Endothelial cell of umbilical vein (primary cell): ENCODE measurements at regions of chr1 and their contacts with region 1.

Region 1: GRCh38 chr1:206030714-206031113 is 7.0 kb upstream of the CTSE start:
- DNase-seq: peak; percentile 75
- H3K4me3 ChIP-seq: no peak overlapping the region
- H3K27ac ChIP-seq: no peak overlapping the region
- H3K4me1 ChIP-seq: peaks cover 32% of the 10 kb centered on the region
- H3K27me3 ChIP-seq: no peaks in the 10 kb centered on the region
- CTCF ChIP-seq: peak; percentile 86
- POLR2A ChIP-seq: no peak

Region 2: GRCh38 chr1:205812878-205813754 is 217.6 kb before region 1 on chr1 and contains the start of gene SLC41A1:
- CTCF ChIA-PET with region 1: no interaction called
- POLR2A ChIA-PET with region 1: no interaction called
- dilution Hi-C with region 1: no loop called
- intact Hi-C with region 1: no loop called
- DNase-seq: peak; percentile 96
- H3K4me3 ChIP-seq: peak within 1 kb of the TSS; percentile 49 to 78 (median 76)
- H3K27ac ChIP-seq: peak within 1 kb of the TSS; percentile 45
- H3K4me1 ChIP-seq: peaks cover 10% of the 10 kb centered on the region
- H3K27me3 ChIP-seq: no peaks in the 10 kb centered on the region
- CTCF ChIP-seq: no peak
- POLR2A ChIP-seq: peak; percentile 41
- total RNA-seq, gene SLC41A1: 21.7 and 23.6 TPM in 2 replicates

Region 3: GRCh38 chr1:205925730-205926129 is 105.0 kb before region 1 on chr1:
- CTCF ChIA-PET with region 1: no interaction called
- POLR2A ChIA-PET with region 1: no interaction called
- dilution Hi-C with region 1: no loop called
- intact Hi-C with region 1: no loop called
- DNase-seq: no peak
- H3K4me3 ChIP-seq: no peak overlapping the region
- H3K27ac ChIP-seq: no peak overlapping the region
- H3K4me1 ChIP-seq: no peaks in the 10 kb centered on the region
- H3K27me3 ChIP-seq: no peaks in the 10 kb centered on the region
- CTCF ChIP-seq: no peak
- POLR2A ChIP-seq: no peak

Region 4: DNA sequence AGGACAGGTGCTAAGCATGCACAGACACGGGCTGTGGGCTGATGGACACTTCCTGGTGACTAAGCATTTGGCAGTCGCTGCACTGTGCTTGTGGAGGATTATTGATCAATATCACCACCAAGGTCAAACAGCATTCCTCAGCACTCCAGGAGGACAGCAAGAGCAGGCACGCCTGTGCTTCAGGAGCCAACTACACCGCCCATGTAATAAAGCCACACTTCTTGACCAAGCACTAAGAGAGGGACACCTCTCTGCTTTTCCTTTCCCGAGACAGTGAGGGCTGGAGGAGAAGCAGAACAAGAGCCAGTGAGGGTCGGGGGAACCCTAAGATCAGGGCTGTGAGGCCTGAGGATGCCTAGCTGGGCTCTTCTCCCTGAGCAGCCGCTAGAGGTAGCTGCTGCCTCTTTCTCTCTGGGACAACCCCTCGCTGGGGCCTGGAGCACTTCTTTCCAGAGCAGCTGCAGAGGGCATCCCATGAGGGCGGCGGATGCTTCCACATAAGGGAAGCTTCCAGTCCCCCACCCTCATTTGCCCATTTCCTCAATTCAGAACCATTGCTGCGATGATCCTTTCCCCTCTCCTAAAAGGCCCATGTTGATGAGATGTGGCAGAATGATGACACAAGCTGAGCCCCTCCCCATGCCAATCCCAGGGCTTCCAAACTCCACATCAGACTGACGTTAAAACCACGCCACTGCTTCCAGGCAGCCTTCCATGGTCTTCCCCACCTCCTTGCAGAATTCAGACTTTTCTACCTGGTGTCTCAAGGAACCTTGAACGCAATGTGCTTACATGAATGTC is 46.6 kb before region 1 on chr1:
- CTCF ChIA-PET with region 1: interaction called, 70 read pairs
- POLR2A ChIA-PET with region 1: no interaction called
- dilution Hi-C with region 1: no loop called
- intact Hi-C with region 1: loop called (anchors 1 kb)
- DNase-seq: peak; percentile 57
- H3K4me3 ChIP-seq: no peak overlapping the region
- H3K27ac ChIP-seq: no peak overlapping the region
- H3K4me1 ChIP-seq: peaks cover 30% of the 10 kb centered on the region
- H3K27me3 ChIP-seq: no peaks in the 10 kb centered on the region
- CTCF ChIP-seq: peak; percentile 84 to 96
- POLR2A ChIP-seq: no peak

Region 5: DNA sequence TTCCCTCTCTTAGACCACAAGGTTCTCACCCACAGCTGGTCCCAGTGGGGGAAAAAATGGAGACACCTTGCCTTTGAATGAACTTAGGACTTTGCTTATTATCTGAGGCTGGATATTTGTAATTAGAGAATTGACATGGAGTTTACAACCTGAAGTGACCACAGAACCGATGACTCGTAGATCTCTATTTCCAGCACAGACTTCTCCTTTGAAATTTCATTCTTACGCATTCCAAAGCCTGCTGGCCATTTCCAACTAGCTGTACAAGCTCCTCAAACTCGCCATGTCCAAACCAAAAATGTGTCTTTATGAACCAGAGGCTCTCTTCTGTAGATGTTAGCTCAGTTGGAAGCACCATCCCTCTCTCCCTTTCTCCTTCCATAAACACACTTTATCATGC is 39.5 kb before region 1 on chr1:
- CTCF ChIA-PET with region 1: interaction called, 70 read pairs
- POLR2A ChIA-PET with region 1: no interaction called
- dilution Hi-C with region 1: no loop called
- intact Hi-C with region 1: loop called (anchors 1 kb)
- DNase-seq: no peak
- H3K4me3 ChIP-seq: no peak overlapping the region
- H3K27ac ChIP-seq: no peak overlapping the region
- H3K4me1 ChIP-seq: peaks cover 21% of the 10 kb centered on the region
- H3K27me3 ChIP-seq: no peaks in the 10 kb centered on the region
- CTCF ChIP-seq: no peak
- POLR2A ChIP-seq: no peak

Region 6: DNA sequence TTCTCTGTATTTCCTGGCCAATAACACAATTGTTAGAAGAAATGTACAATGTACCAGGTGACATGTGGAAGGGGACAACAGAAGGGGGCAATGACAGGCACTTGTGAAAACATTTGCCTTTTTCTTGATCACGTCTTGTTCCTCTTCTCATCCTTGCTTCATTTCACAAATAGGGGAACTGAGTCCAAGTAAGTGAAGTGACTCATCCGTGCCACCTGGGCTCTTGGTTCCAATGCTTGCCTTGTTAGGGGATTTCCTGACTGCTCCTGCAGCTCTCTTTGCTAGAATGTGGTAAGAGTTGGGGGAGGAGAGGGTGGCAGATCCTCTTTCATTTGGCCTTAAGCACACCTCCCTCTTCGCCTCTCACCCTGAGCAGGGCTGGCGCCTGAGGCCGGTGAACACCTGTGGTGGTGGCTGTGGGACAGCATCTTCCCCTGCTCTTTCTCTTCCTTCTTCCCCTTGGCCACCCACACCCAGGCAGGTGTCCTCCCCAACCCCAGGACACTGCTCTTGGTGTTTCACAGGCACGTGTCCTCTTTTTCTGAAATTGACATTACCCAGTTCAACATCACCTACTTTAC is 20.0 kb after region 1 on chr1:
- CTCF ChIA-PET with region 1: interaction called, 15 read pairs
- POLR2A ChIA-PET with region 1: no interaction called
- dilution Hi-C with region 1: no loop called
- intact Hi-C with region 1: no loop called
- DNase-seq: no peak
- H3K4me3 ChIP-seq: no peak overlapping the region
- H3K27ac ChIP-seq: no peak overlapping the region
- H3K4me1 ChIP-seq: no peaks in the 10 kb centered on the region
- H3K27me3 ChIP-seq: peaks cover 0 to 5% of the 10 kb centered on the region in 2 experiments
- CTCF ChIP-seq: no peak
- POLR2A ChIP-seq: no peak